ENCODE measurements at regions of chr12 and their contacts with region 1.

Region 1: GRCh38 chr12:121793838-121794533 is 498 bp upstream of the RHOF start:
- DNase-seq: peak; percentile 94
- H3K4me3 ChIP-seq: peak overlapping the region; percentile 22 to 43 (median 43)
- H3K27ac ChIP-seq: peak overlapping the region; percentile 1
- H3K4me1 ChIP-seq: peaks cover 45% of the 10 kb centered on the region
- H3K27me3 ChIP-seq: no peaks in the 10 kb centered on the region
- CTCF ChIP-seq: peak; percentile 100
- POLR2A ChIP-seq: peak; percentile 80

Region 2: GRCh38 chr12:121579981-121580868 is 213.8 kb before region 1 on chr12:
- CTCF ChIA-PET with region 1: no interaction called
- POLR2A ChIA-PET with region 1: no interaction called
- dilution Hi-C with region 1: no loop called
- intact Hi-C with region 1: loop called (anchors 5 kb)
- DNase-seq: peak; percentile 58
- H3K4me3 ChIP-seq: peak overlapping the region; percentile 59 to 84 (median 76)
- H3K27ac ChIP-seq: peak overlapping the region; percentile 73
- H3K4me1 ChIP-seq: peaks cover 33% of the 10 kb centered on the region
- H3K27me3 ChIP-seq: no peaks in the 10 kb centered on the region
- CTCF ChIP-seq: no peak
- POLR2A ChIP-seq: peak; percentile 17

Region 3: GRCh38 chr12:121697098-121697698 is 96.8 kb before region 1 on chr12:
- CTCF ChIA-PET with region 1: interaction called, 33 read pairs
- POLR2A ChIA-PET with region 1: interaction called, 3 read pairs
- dilution Hi-C with region 1: no loop called
- intact Hi-C with region 1: loop called (anchors 1 kb)
- DNase-seq: peak; percentile 62
- H3K4me3 ChIP-seq: no peak overlapping the region
- H3K27ac ChIP-seq: no peak overlapping the region
- H3K4me1 ChIP-seq: no peaks in the 10 kb centered on the region
- H3K27me3 ChIP-seq: peaks cover under 1 to 3% of the 10 kb centered on the region in 2 experiments
- CTCF ChIP-seq: peak in 1 of 2 donors; percentile 19
- POLR2A ChIP-seq: no peak

Region 4: GRCh38 chr12:121748571-121749253 is 45.3 kb before region 1 on chr12:
- CTCF ChIA-PET with region 1: interaction called, 13 read pairs
- POLR2A ChIA-PET with region 1: no interaction called
- dilution Hi-C with region 1: no loop called
- intact Hi-C with region 1: loop called (anchors 5 kb)
- DNase-seq: peak; percentile 95
- H3K4me3 ChIP-seq: no peak overlapping the region
- H3K27ac ChIP-seq: peak overlapping the region; percentile 86
- H3K4me1 ChIP-seq: peaks cover 12% of the 10 kb centered on the region
- H3K27me3 ChIP-seq: no peaks in the 10 kb centered on the region
- CTCF ChIP-seq: no peak
- POLR2A ChIP-seq: no peak

Region 5: GRCh38 chr12:121811434-121812319 is 17.7 kb after region 1 on chr12:
- CTCF ChIA-PET with region 1: interaction called, 774 read pairs
- POLR2A ChIA-PET with region 1: interaction called, 37 read pairs
- dilution Hi-C with region 1: no loop called
- intact Hi-C with region 1: loop called (anchors 1 kb)
- DNase-seq: peak; percentile 67
- H3K4me3 ChIP-seq: peak overlapping the region in 2 of 3 experiments; percentile 49
- H3K27ac ChIP-seq: no peak overlapping the region
- H3K4me1 ChIP-seq: peaks cover 27% of the 10 kb centered on the region
- H3K27me3 ChIP-seq: no peaks in the 10 kb centered on the region
- CTCF ChIP-seq: peak; percentile 89 to 94
- POLR2A ChIP-seq: no peak

Region 6: GRCh38 chr12:121888478-121889266 is 94.7 kb after region 1 on chr12 and contains the start of gene PSMD9:
- CTCF ChIA-PET with region 1: interaction called, 101 read pairs
- POLR2A ChIA-PET with region 1: interaction called, 4 read pairs
- dilution Hi-C with region 1: no loop called
- intact Hi-C with region 1: loop called (anchors 1 kb)
- DNase-seq: peak; percentile 96
- H3K4me3 ChIP-seq: peak within 1 kb of the TSS; percentile 25 to 90 (median 82)
- H3K27ac ChIP-seq: peak within 1 kb of the TSS; percentile 26
- H3K4me1 ChIP-seq: peaks cover 17% of the 10 kb centered on the region
- H3K27me3 ChIP-seq: no peaks in the 10 kb centered on the region
- CTCF ChIP-seq: peak; percentile 60 to 87
- POLR2A ChIP-seq: peak; percentile 96
- total RNA-seq, gene PSMD9: 64.6 and 69.2 TPM in 2 replicates